Posterior cingulate gyrus (tissue), 11 donors: ENCODE measurements at regions of chr11 and their contacts with region 1.

Region 1: DNA sequence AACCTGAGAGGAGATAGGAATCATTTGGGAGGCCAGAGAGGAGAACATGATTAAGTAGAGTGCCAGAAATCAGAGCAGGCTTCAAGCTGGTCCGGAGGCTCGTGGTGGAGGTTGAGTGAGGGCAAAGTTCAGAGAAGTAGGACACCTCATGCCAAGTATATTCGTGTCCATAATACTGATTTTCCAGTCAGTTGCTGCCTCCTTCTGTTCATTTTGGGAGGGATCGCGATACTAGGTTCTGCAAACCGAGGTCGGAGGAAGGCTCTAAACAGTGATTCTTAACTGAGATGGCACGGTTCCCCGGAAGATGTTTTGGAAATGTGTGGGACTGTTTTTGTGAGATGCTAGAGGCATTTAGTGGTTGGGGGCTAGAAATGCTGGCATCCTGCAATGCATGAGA is 13.6 kb upstream of the CD3E start:
- DNase-seq: peak in 1 of 10 donors; percentile 10

Region 2: GRCh38 chr11:118342503-118343161 is 51.7 kb after region 1 on chr11 and contains the start of gene CD3D:
- intact Hi-C with region 1: loop called (anchors 10 kb)
- DNase-seq: no peak